ENCODE measurements at regions of chr5 and their contacts with region 1.

Region 1: GRCh38 chr5:39217365-39218281 is 1.7 kb downstream of the FYB1 start:
- DNase-seq: peak; percentile 74
- ATAC-seq: peak; percentile 86
- H3K4me3 Mint-ChIP-seq: no peak overlapping the region
- H3K27ac Mint-ChIP-seq: no peak overlapping the region
- H3K4me1 Mint-ChIP-seq: 0 out of 2 replicates have a peak, but pooled peaks cover 9% of the 10 kb centered on the region
- H3K27me3 Mint-ChIP-seq: no peaks in the 10 kb centered on the region
- CTCF ChIP-seq: peak; percentile 85

Region 2: GRCh38 chr5:39194466-39195136 is 23.0 kb before region 1 on chr5:
- CTCF ChIA-PET with region 1: interaction called, 11 read pairs
- POLR2A ChIA-PET with region 1: no interaction called
- DNase-seq: no peak
- ATAC-seq: no peak
- H3K4me3 Mint-ChIP-seq: no peak overlapping the region
- H3K27ac Mint-ChIP-seq: no peak overlapping the region
- H3K4me1 Mint-ChIP-seq: no peaks in the 10 kb centered on the region
- H3K27me3 Mint-ChIP-seq: no peaks in the 10 kb centered on the region
- CTCF ChIP-seq: no peak

Region 3: DNA sequence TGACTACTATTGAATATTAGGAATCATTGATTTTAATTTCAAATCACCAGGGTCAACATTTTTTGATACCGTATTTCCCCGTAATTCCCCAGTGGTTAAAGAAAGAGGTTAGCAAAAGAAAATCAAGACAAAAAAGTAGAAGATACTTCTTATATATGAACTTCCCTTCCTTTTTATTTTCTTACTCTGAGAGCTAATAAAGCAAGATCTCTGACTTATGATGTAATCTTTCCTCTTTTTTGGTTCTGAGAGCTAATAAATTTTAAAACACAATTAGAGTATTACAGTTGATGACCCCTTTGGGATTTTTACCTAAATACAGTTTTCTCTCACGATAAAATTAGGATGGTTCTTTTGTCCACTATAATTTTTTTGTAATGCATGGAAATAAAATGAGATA is 11.0 kb after region 1 on chr5:
- CTCF ChIA-PET with region 1: interaction called, 13 read pairs
- POLR2A ChIA-PET with region 1: no interaction called
- DNase-seq: no peak
- ATAC-seq: no peak
- H3K4me3 Mint-ChIP-seq: no peak overlapping the region
- H3K27ac Mint-ChIP-seq: no peak overlapping the region
- H3K4me1 Mint-ChIP-seq: peaks cover 4% of the 10 kb centered on the region
- H3K27me3 Mint-ChIP-seq: no peaks in the 10 kb centered on the region
- CTCF ChIP-seq: no peak

Region 4: DNA sequence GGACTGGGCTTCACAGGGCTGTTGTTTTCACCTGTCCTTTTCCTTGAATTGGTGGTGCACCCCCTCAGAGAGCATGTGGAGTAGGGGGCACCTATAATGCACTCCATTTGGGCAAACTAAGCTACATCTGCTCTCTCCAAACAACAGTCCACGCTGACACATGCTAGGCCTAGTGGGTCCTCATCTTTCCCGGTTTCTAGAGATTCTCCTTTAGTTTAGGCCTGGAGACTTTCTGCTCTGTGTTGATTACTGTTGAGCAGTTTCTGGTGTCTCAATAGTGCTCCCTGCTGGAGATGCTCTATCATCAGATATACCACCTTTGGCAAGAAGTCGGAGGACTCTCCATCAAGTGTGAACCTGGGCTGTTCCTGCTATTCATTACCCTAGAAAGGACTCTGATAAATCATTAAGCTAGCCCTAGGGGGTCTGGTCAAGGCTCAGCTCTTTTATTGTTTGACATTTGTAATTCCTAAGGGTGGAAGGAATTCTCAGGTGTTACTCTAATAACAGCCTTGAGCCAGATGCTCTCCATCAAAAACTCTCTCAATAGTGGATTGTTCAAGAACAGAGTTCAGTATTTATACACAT is 65.7 kb after region 1 on chr5:
- CTCF ChIA-PET with region 1: interaction called, 13 read pairs
- POLR2A ChIA-PET with region 1: no interaction called
- DNase-seq: peak; percentile 18
- ATAC-seq: peak; percentile 100
- H3K4me3 Mint-ChIP-seq: no peak overlapping the region
- H3K27ac Mint-ChIP-seq: peak overlapping the region; percentile 37; the same call in 1 of the 2 replicates
- H3K4me1 Mint-ChIP-seq: peaks cover 13% of the 10 kb centered on the region
- H3K27me3 Mint-ChIP-seq: no peaks in the 10 kb centered on the region
- CTCF ChIP-seq: peak; percentile 42; the same call in 1 of the 2 replicates

Region 5: GRCh38 chr5:39424736-39425637 is 207.4 kb after region 1 on chr5 and contains the start of gene DAB2:
- CTCF ChIA-PET with region 1: interaction called, 13 read pairs
- POLR2A ChIA-PET with region 1: no interaction called
- DNase-seq: peak; percentile 85
- ATAC-seq: peak; percentile 88
- H3K4me3 Mint-ChIP-seq: peak within 1 kb of the TSS; percentile 82
- H3K27ac Mint-ChIP-seq: peak within 1 kb of the TSS; percentile 27; the same call in 1 of the 2 replicates
- H3K4me1 Mint-ChIP-seq: peaks cover 54% of the 10 kb centered on the region
- H3K27me3 Mint-ChIP-seq: peaks cover 5% of the 10 kb centered on the region; the same call in 1 of the 2 replicates
- CTCF ChIP-seq: no peak
- total RNA-seq, gene DAB2: 3.8 to 7.2 TPM (median 3.9 TPM) in 3 replicates